Cardiac septum (tissue), 1 donor: ENCODE measurements at regions of chr15 and their contacts with region 1.

Region 1: GRCh38 chr15:60916679-60917460 is 312.2 kb downstream of the RORA start:
- DNase-seq: peak; percentile 85

Region 2: GRCh38 chr15:60507596-60508424 is 409.1 kb before region 1 on chr15:
- intact Hi-C with region 1: loop called (anchors 5 kb)
- DNase-seq: no peak

Region 3: GRCh38 chr15:60585743-60586708 is 330.8 kb before region 1 on chr15:
- intact Hi-C with region 1: loop called (anchors 2 kb)
- DNase-seq: no peak

Region 4: GRCh38 chr15:60601098-60601497 is 315.8 kb before region 1 on chr15:
- intact Hi-C with region 1: no loop called
- DNase-seq: no peak

Region 5: GRCh38 chr15:61049934-61050333 is 133.1 kb after region 1 on chr15:
- intact Hi-C with region 1: loop called (anchors 10 kb)
- DNase-seq: no peak

Region 6: GRCh38 chr15:61834076-61834697 is 917.3 kb after region 1 on chr15:
- intact Hi-C with region 1: loop called (anchors 10 kb)
- DNase-seq: no peak